AG04450 (cell line): ENCODE measurements at regions of chr7 and their contacts with region 1.

Region 1: GRCh38 chr7:137953665-137954470 is 48.0 kb downstream of the CREB3L2 start:
- DNase-seq: no peak
- H3K4me3 ChIP-seq: peak overlapping the region; percentile 8; the same call in 1 of the 2 replicates
- H3K27ac ChIP-seq: peak overlapping the region; percentile 92
- H3K27me3 ChIP-seq: no peaks in the 10 kb centered on the region
- CTCF ChIP-seq: no peak

Region 2: GRCh38 chr7:137943147-137943551 is 10.7 kb before region 1 on chr7:
- CTCF ChIA-PET with region 1: no interaction called
- POLR2A ChIA-PET with region 1: interaction called, 32 read pairs
- DNase-seq: peak; percentile 91
- H3K4me3 ChIP-seq: no peak overlapping the region
- H3K27ac ChIP-seq: peak overlapping the region; percentile 92
- H3K27me3 ChIP-seq: no peaks in the 10 kb centered on the region
- CTCF ChIP-seq: no peak

Region 3: GRCh38 chr7:137975221-137975620 is 21.4 kb after region 1 on chr7:
- CTCF ChIA-PET with region 1: no interaction called
- POLR2A ChIA-PET with region 1: interaction called, 11 read pairs
- DNase-seq: no peak
- H3K4me3 ChIP-seq: no peak overlapping the region
- H3K27ac ChIP-seq: peak overlapping the region; percentile 78
- H3K27me3 ChIP-seq: no peaks in the 10 kb centered on the region
- CTCF ChIP-seq: no peak

Region 4: GRCh38 chr7:138089080-138089991 is 135.5 kb after region 1 on chr7:
- CTCF ChIA-PET with region 1: no interaction called
- POLR2A ChIA-PET with region 1: no interaction called
- DNase-seq: no peak
- H3K4me3 ChIP-seq: no peak overlapping the region
- H3K27ac ChIP-seq: no peak overlapping the region
- H3K27me3 ChIP-seq: no peaks in the 10 kb centered on the region
- CTCF ChIP-seq: no peak

Region 5: DNA sequence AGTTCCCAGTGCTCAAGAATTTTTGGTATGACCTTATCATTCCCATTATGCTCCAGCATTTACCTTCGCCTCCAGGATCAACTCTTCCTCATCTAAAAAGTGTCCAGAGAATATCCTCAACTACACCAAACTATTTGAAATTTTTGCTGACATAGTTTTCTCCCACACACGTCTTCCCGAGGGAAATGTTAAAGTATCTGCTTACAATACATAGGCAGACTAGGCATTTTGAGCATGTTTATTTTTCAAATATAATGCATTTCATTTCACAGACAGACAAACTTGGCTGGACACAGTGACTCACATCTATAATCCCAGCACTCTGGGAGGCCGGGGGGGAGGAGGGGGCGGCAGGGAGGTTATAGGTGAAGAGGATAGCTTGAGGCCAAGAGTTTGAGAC is 329.1 kb after region 1 on chr7:
- CTCF ChIA-PET with region 1: no interaction called
- POLR2A ChIA-PET with region 1: no interaction called
- DNase-seq: no peak
- H3K4me3 ChIP-seq: no peak overlapping the region
- H3K27ac ChIP-seq: no peak overlapping the region
- H3K27me3 ChIP-seq: no peaks in the 10 kb centered on the region
- CTCF ChIP-seq: no peak